Lower leg skin (tissue), 4 donors: ENCODE measurements at regions of chr11 and their contacts with region 1.

Region 1: DNA sequence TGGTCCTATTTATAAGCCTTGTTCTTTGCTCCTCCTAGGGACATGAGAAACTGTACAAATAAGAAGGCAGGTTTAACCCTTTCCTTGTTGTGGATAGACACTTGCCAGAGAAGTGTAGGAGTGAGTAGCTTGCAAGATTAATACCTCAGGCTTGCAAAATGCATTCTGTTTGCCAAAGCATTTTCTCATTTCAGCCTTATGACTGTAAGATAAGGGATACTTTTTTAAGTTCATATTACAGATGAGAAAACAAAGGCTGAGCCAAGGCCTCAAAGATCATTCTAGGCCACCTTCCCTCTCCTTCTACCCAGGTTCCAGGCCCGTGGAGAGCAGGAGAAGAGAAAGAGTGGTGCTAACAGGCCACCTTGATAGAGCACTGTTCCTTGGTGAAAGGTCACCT is 46.8 kb downstream of the TRIM29 start:
- DNase-seq: no peak
- H3K4me3 ChIP-seq: no peak overlapping the region
- CTCF ChIP-seq: no peak
- POLR2A ChIP-seq: no peak

Region 2: DNA sequence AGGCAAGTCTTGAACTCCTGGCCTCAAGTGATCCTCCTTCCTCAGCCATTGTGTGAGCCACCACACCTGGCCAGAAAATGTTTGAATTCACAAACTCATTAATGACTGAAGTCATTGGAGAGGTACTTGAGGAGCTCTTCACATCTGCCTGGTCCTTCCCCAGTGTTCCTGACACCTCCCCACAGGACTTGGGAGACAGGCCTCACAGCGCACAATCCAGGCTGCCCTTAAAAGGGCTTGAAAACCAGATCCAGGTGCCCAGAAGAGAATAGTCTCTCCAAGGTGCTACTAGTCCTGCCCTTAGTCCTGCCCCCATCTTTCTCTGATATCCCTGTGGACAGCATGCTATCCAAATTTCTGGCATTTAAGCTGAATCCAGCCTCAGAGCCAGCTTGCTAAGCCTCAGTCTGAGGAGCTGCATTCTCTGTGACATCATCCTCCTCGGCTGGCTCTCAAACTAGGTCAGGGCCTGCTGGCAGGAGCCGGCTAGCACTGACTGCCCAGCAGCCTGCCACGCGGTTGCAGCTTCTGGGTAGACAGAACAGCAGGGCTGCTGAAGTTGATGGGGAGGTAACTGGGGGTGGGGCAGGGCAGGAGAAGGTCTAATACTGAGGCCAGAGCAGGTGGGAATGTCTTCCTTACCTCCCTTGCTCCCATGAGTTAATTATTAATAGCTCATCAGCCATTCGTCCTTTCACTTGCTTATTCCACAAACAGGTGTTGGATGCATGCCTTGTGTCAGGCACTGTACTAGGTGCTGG is 326.8 kb before region 1 on chr11:
- intact Hi-C with region 1: loop called (anchors 1 kb)
- DNase-seq: no peak
- H3K4me3 ChIP-seq: no peak overlapping the region
- CTCF ChIP-seq: no peak
- POLR2A ChIP-seq: no peak